ENCODE measurements at regions of chr4 and their contacts with region 1.

Region 1: DNA sequence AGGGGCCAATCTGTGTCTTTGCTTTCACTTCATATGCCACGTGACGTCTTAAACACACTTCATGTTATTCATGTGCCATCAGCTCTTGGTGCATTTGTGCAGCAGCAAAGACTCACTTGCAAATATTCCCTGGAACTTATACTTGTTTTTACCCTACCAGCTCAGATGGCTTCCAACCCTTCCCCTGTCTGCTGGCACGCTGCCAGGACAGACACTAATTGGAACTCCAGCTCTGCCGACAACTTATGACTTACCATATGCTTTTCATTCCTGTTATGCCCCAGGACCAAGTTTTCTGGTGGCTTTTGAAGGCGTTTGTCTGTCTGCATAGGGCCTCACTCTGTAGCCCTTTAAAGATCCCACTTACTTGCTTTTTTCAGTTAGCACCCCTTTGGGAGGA is 261.7 kb upstream of the GNPDA2 start:
- DNase-seq: no peak
- H3K4me3 Mint-ChIP-seq: no peak overlapping the region
- H3K27ac Mint-ChIP-seq: no peak overlapping the region
- H3K4me1 Mint-ChIP-seq: peaks cover 19% of the 10 kb centered on the region
- H3K27me3 Mint-ChIP-seq: no peaks in the 10 kb centered on the region
- CTCF ChIP-seq: no peak

Region 2: DNA sequence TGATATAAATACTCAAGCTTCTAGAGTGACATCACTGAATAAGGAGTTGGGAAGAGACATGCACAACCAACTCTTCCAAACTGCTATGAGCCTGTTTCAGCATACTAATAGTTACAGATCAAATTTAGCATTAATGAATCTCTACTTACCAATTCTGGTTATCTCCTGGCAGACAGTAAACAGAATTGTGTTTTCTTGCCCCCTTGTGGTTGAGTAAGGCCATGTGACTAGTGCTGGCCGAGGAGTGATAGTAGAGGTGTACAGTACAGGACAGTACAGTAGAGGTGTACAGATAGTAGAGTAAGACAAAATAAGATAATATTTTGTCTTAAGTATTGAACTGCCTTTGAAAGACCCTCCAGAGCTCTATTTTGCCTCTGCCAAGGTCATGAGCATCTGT is 454.5 kb after region 1 on chr4:
- CTCF ChIA-PET with region 1: interaction called, 22 read pairs
- POLR2A ChIA-PET with region 1: no interaction called
- intact Hi-C with region 1: loop called (anchors 2 kb)
- DNase-seq: peak; percentile 63
- H3K4me3 Mint-ChIP-seq: no peak overlapping the region
- H3K27ac Mint-ChIP-seq: no peak overlapping the region
- H3K4me1 Mint-ChIP-seq: peaks cover 7% of the 10 kb centered on the region
- H3K27me3 Mint-ChIP-seq: no peaks in the 10 kb centered on the region
- CTCF ChIP-seq: peak; percentile 44

Measured in MCF 10A (cell line).